HepG2 (cell line): ENCODE measurements at regions of chr10 and their contacts with region 1.

Region 1: DNA sequence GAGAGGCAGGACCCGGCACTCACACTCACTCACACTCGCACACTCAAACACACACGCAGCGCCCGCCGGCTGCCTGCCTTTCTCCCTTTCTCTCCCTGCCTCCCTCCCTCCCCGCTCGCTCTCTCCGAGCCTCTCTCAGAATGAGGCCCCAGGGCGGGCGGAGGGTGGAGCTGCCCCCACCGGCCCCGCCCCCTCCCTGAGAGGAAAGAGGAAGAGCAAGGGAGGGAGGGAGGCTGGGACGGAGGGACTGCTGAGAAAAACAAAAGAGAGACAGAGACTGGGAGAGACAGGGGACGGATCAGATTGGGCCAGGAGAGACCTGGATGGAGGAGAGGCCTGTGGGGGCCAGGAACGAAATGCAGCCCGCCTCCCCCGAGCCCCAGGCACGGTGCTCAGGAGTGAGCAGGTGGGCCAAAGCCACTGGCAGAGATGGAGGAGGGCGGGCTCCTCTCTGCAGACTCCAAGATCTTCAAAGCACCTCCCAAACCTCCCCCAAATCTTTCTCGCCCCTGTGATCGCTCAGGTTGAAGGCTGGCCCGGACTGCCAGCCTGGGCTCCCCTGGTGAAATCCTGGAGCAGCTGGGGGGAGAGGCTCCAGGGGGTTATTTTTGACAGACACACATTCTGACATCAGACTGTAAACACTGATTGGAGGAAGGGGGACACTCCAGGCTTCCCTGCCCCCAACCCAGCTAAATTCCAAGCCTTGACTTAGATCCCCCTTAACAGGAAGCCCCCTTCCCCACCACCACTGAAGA is 5.1 kb downstream of the LDB1 start:
- DNase-seq: peak; percentile 79
- ATAC-seq: peak; percentile 83
- H3K4me3 ChIP-seq: peak overlapping the region; percentile 77 to 96 (median 86)
- H3K27ac ChIP-seq: no peak overlapping the region
- H3K4me1 ChIP-seq: peaks cover 66% of the 10 kb centered on the region
- H3K27me3 ChIP-seq: no peaks in the 10 kb centered on the region
- CTCF ChIP-seq: no peak
- EP300 ChIP-seq: 0 out of 4 replicates have a peak, but pooled peaks of 1 of the 2 experiments have one; percentile 6
- POLR2A ChIP-seq: peak; percentile 67 to 94
- RAD21 ChIP-seq: no peak

Region 2: DNA sequence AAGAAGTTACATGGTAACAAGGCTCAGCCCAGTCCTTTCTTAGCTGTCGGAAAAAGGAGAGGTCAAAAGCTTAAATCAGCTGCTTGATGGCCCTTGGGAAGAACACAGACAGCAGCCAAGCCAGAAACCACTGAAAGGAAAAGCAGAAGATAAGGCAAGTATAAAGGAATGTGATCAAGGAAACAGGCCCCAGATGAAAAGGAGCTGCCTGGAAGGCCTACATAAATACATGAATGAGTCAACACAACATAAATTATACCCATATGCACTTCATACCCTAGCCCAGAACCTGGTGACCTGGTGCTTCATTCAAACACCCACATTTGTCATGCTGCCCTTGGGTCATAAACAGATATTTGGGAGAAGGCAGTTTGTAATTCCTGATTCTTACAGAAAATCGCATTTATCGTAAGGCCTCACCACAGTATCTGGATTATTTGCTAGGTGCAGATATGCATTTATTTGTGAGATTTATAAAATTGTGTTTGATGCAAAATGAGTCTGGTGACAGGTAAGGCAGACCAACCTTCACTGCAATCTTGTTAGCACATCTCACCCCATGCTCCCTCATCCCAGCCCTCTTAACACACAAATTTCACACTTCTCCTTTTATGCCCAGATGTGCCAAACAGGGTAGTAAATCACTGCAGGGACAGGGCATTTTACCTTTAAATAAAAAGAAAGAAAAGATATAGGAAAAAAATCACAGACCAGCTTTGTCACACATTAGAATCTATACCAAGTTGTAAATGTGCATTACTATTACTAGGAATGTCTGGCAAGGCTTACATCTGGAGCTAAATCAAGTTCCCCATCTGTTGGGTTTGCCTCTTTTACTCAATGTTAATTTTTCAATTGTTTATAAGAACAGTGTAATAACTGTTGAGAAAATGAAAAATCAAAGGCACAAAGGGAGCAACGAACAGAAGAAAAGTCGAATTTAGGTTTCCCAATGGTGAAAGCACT is 176.4 kb before region 1 on chr10:
- CTCF ChIA-PET with region 1: no interaction called
- POLR2A ChIA-PET with region 1: no interaction called
- in situ Hi-C with region 1: no loop called
- intact Hi-C with region 1: no loop called
- DNase-seq: no peak
- ATAC-seq: no peak
- H3K4me3 ChIP-seq: no peak overlapping the region
- H3K27ac ChIP-seq: no peak overlapping the region
- H3K4me1 ChIP-seq: no peaks in the 10 kb centered on the region
- H3K27me3 ChIP-seq: no peaks in the 10 kb centered on the region
- CTCF ChIP-seq: no peak
- EP300 ChIP-seq: no peak
- POLR2A ChIP-seq: no peak
- RAD21 ChIP-seq: no peak

Region 3: DNA sequence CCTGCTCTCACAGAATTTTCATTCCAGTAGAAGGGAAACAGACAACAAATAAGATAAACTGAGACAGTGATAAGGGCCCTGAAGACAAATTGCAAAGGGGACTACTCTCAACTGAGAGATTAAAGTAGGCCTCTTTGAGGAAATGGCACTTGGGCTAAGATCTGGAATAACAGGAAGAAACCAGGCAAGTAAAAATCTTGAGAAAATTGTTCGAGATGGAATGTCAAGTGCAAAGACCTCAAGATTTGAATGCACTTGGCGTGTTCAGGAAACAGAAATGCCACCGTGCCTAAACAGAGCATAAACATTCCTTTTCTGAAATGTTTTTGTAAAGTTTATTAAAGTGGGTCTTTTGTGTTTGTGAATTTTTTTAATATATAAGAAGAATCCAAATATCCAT is 69.7 kb before region 1 on chr10:
- CTCF ChIA-PET with region 1: no interaction called
- POLR2A ChIA-PET with region 1: no interaction called
- in situ Hi-C with region 1: no loop called
- intact Hi-C with region 1: no loop called
- DNase-seq: no peak
- ATAC-seq: no peak
- H3K4me3 ChIP-seq: no peak overlapping the region
- H3K27ac ChIP-seq: no peak overlapping the region
- H3K4me1 ChIP-seq: peaks cover 6% of the 10 kb centered on the region; the same call in 1 of the 2 replicates
- H3K27me3 ChIP-seq: no peaks in the 10 kb centered on the region
- CTCF ChIP-seq: no peak
- EP300 ChIP-seq: no peak
- POLR2A ChIP-seq: no peak
- RAD21 ChIP-seq: no peak

Region 4: GRCh38 chr10:102064868-102065560 is 50.0 kb before region 1 on chr10 and contains the start of gene HPS6:
- CTCF ChIA-PET with region 1: no interaction called
- POLR2A ChIA-PET with region 1: interaction called, 4 read pairs
- in situ Hi-C with region 1: no loop called
- intact Hi-C with region 1: loop called (anchors 5 kb)
- DNase-seq: peak; percentile 81
- ATAC-seq: peak; percentile 95
- H3K4me3 ChIP-seq: peak within 1 kb of the TSS; percentile 91 to 93 (median 93)
- H3K27ac ChIP-seq: peak within 1 kb of the TSS; percentile 80
- H3K4me1 ChIP-seq: peaks cover 29% of the 10 kb centered on the region
- H3K27me3 ChIP-seq: no peaks in the 10 kb centered on the region
- CTCF ChIP-seq: peak; percentile 70
- EP300 ChIP-seq: no peak
- POLR2A ChIP-seq: peak; percentile 82 to 87
- RAD21 ChIP-seq: peak; percentile 8; the same call in 1 of the 2 replicates
- total RNA-seq, gene HPS6: 14.9 and 15.1 TPM in 2 replicates

Region 5: GRCh38 chr10:102101152-102101551 is 13.9 kb before region 1 on chr10:
- CTCF ChIA-PET with region 1: no interaction called
- POLR2A ChIA-PET with region 1: interaction called, 28 read pairs
- in situ Hi-C with region 1: no loop called
- intact Hi-C with region 1: no loop called
- DNase-seq: no peak
- ATAC-seq: peak; percentile 89
- H3K4me3 ChIP-seq: no peak overlapping the region
- H3K27ac ChIP-seq: no peak overlapping the region
- H3K4me1 ChIP-seq: no peaks in the 10 kb centered on the region
- H3K27me3 ChIP-seq: no peaks in the 10 kb centered on the region
- CTCF ChIP-seq: peak; percentile 49
- EP300 ChIP-seq: no peak
- POLR2A ChIP-seq: no peak
- RAD21 ChIP-seq: no peak

Region 6: GRCh38 chr10:102132563-102133372 is 17.7 kb after region 1 on chr10 and contains the start of gene PPRC1:
- CTCF ChIA-PET with region 1: no interaction called
- POLR2A ChIA-PET with region 1: interaction called, 11 read pairs
- in situ Hi-C with region 1: no loop called
- intact Hi-C with region 1: no loop called
- DNase-seq: peak; percentile 98
- ATAC-seq: peak; percentile 93
- H3K4me3 ChIP-seq: peak within 1 kb of the TSS; percentile 82 to 96 (median 92)
- H3K27ac ChIP-seq: peak within 1 kb of the TSS; percentile 88
- H3K4me1 ChIP-seq: peaks cover 41% of the 10 kb centered on the region
- H3K27me3 ChIP-seq: peaks cover 0 to 4% of the 10 kb centered on the region in 2 experiments; a peak in 1 of 5 replicates
- CTCF ChIP-seq: peak; percentile 93
- EP300 ChIP-seq: 0 out of 4 replicates have a peak, but pooled peaks of 1 of the 2 experiments have one; percentile 11
- POLR2A ChIP-seq: peak; percentile 79 to 82
- RAD21 ChIP-seq: peak; percentile 67
- total RNA-seq, gene PPRC1: 19.0 and 24.2 TPM in 2 replicates